ENCODE measurements at regions of chr10 and their contacts with region 1.

Region 1: DNA sequence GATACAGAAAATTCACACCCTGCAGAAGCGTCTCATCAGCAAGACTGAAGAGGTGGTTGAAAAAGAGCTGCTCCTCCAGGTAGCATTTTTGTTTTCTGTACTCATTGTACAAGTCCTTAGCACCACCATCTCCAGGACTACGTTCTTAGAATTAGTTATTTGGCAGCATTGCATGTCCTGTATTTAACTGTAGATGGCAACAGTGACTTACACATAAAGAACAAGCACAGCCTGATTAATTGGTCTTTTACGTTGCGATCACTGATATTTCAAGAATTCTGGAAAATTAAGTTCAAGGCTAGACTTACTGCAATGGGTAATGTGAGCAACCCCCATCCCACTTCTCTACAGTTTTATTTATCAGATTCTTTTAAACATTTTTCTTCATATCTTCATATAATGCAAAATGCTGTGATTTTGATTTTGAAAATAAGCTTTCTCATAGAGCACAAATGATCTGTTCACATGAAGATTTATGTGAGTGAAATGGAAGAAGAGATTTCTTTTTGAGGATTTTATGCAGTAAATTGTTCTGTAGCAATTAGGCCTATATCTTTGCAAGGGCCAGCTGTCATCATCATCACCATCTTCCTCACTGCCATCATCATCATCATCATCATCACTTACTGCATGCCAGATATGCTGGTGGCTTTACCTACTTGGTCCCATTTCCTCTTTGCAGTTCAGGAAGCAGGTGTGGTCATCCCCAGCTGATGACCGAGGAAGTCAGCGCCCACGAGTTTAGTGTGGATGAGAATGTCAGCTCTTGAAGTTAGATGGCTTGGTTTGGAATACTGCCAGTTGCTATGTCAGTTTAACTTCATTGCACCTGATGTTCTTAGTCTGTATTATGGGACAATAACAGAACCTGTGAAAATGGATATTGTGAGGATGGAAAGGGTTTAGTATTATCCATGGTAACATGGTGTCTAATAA is 53.4 kb downstream of the CFAP58 start:
- DNase-seq: peak; percentile 55
- H3K4me3 Mint-ChIP-seq: no peak overlapping the region
- H3K27ac Mint-ChIP-seq: no peak overlapping the region
- H3K4me1 Mint-ChIP-seq: no peaks in the 10 kb centered on the region
- H3K27me3 Mint-ChIP-seq: no peaks in the 10 kb centered on the region
- CTCF ChIP-seq: peak; percentile 64

Region 2: DNA sequence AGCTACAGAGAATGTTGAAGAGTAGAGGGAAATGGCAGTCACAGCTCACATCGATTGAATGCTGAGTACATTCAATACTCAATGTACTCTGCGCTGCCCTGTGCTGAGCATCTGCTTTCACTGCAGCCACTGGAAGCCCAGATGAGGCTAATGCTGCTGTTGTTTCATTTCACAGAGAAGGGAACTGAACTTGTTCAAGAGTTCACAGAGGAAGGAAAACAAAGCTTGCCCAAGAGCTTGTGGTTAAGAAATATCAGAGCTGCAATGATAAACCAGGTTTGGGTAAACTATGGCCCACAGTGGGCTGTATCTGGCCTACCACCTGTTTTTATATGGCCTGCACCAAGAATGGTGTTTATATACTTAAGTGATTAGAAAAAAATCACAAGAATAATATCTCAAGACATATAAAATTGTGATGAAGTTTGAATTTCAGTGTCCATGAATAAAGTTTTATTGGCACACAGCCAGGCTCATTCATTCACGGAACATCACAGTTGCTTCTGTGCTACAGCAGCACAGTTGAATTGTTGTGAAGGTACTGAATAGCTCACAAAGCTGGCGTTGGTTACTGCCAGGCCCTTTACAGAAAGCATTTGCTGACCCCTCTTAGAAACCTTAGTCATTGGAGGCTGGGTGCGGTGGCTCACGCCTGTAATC is 10.8 kb after region 1 on chr10:
- CTCF ChIA-PET with region 1: interaction called, 18 read pairs
- POLR2A ChIA-PET with region 1: no interaction called
- intact Hi-C with region 1: no loop called
- DNase-seq: no peak
- H3K4me3 Mint-ChIP-seq: no peak overlapping the region
- H3K27ac Mint-ChIP-seq: no peak overlapping the region
- H3K4me1 Mint-ChIP-seq: no peaks in the 10 kb centered on the region
- H3K27me3 Mint-ChIP-seq: no peaks in the 10 kb centered on the region
- CTCF ChIP-seq: no peak

Region 3: DNA sequence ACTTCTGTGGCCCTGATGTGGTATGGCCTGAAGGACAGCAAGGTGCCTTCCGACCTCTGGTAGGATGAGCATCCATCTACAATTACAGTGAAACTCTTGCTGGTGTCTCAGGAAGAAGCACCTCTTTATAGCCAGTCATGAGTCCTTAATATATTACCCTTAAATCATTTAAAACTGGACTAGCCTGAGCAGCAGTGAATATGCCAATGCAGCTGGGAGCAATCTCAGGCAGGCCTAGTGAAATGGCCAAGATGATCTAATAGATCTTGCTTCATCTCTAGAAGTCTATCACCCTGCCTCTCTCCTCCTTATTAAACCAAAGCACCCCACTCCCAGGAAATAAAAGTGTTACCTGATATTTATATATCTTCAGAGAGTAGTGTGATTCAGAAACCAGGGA is 167.4 kb after region 1 on chr10:
- CTCF ChIA-PET with region 1: interaction called, 65 read pairs
- POLR2A ChIA-PET with region 1: no interaction called
- intact Hi-C with region 1: no loop called
- DNase-seq: no peak
- H3K4me3 Mint-ChIP-seq: no peak overlapping the region
- H3K27ac Mint-ChIP-seq: no peak overlapping the region
- H3K4me1 Mint-ChIP-seq: no peaks in the 10 kb centered on the region
- H3K27me3 Mint-ChIP-seq: no peaks in the 10 kb centered on the region
- CTCF ChIP-seq: no peak

Region 4: GRCh38 chr10:104601166-104601565 is 194.2 kb after region 1 on chr10:
- CTCF ChIA-PET with region 1: interaction called, 11 read pairs
- POLR2A ChIA-PET with region 1: no interaction called
- intact Hi-C with region 1: no loop called
- DNase-seq: no peak
- H3K4me3 Mint-ChIP-seq: no peak overlapping the region
- H3K27ac Mint-ChIP-seq: no peak overlapping the region
- H3K4me1 Mint-ChIP-seq: no peaks in the 10 kb centered on the region
- H3K27me3 Mint-ChIP-seq: no peaks in the 10 kb centered on the region
- CTCF ChIP-seq: no peak

Region 5: DNA sequence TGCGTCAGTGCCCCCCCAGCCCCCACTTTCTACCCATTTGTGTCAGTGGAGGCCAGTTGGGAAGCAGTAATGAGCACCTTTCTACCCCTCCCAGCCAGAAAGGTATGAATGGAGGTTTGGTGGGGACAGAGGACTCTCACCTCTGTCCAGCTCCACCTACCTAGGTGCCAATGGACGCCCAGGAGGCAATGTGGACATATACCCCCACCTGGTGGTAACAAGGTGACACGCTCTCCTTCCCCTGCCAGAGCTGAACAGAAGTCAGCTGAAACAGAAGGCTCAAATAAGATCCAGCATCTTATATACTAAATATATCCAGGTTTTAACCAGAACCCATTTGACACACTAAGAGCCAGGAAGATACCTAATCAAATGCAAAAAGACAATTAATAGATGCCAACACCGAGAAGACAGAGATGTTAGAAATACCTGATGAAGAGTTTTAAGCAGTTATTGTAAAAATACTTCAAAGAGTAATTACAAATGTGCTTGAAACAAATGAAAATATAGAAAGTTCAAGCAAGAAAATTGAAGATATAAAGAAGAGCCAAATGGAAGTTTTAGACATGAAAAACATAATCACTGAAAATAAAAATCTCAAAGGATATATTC is 215.7 kb after region 1 on chr10:
- CTCF ChIA-PET with region 1: interaction called, 155 read pairs
- POLR2A ChIA-PET with region 1: interaction called, 12 read pairs
- intact Hi-C with region 1: loop called (anchors 1 kb)
- DNase-seq: peak; percentile 67
- H3K4me3 Mint-ChIP-seq: no peak overlapping the region
- H3K27ac Mint-ChIP-seq: no peak overlapping the region
- H3K4me1 Mint-ChIP-seq: no peaks in the 10 kb centered on the region
- H3K27me3 Mint-ChIP-seq: peaks cover 41% of the 10 kb centered on the region
- CTCF ChIP-seq: peak; percentile 87

Measured in MCF 10A (cell line).